ENCODE measurements at regions of chr1 and their contacts with region 1.

Region 1: GRCh38 chr1:33295450-33296081 is 25.3 kb downstream of the A3GALT2 start:
- DNase-seq: peak; percentile 86 to 95 (median 93)
- ATAC-seq: peak; percentile 97
- H3K4me3 ChIP-seq: no peak overlapping the region
- H3K4me1 ChIP-seq: no peaks in the 10 kb centered on the region
- CTCF ChIP-seq: peak; percentile 96

Region 2: GRCh38 chr1:32948905-32949304 is 346.7 kb before region 1 on chr1:
- intact Hi-C with region 1: no loop called
- DNase-seq: no peak
- ATAC-seq: peak; percentile 95
- H3K4me3 ChIP-seq: no peak overlapping the region
- H3K4me1 ChIP-seq: peaks cover 30% of the 10 kb centered on the region
- CTCF ChIP-seq: no peak

Region 3: DNA sequence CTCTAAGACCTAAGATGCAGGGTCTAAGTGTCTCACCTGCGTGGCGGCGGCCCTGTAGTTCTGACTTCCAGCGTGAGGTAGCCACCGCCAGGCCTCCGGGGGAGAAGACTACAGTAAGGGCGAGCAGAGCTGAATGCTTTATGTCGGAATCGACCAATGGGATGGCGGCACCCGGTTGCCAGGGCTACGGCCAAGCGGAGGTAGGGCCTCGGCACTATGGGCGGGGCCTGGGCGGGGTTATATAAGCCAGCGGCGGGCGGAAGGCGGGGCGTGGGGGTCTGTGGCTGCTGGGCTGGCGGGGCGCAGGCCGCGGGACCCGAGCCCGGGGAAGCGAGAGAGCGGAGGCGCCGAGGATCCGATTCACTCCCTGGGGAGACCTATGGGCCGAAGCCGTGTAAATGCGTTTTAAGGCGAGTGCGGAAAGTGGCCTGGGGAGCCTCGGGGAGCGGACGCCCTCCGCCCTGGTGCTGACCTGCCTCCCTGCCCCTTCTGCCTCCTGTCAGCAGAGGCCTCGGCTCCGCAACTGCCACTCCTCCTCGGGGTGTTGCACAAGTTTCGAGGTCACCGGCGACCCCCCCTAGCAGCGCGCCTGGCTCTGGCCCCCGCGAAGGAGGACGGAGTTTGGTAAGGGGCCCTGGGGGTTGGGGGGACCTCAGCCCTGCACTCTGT is 214.5 kb before region 1 on chr1 and contains the start of gene AZIN2:
- intact Hi-C with region 1: no loop called
- DNase-seq: peak; percentile 98 to 99 (median 99)
- ATAC-seq: peak; percentile 99
- H3K4me3 ChIP-seq: peak within 1 kb of the TSS; percentile 29
- H3K4me1 ChIP-seq: no peaks in the 10 kb centered on the region
- CTCF ChIP-seq: no peak
- total RNA-seq, gene AZIN2: 13.8 to 36.5 (median 19.0) TPM

Region 4: DNA sequence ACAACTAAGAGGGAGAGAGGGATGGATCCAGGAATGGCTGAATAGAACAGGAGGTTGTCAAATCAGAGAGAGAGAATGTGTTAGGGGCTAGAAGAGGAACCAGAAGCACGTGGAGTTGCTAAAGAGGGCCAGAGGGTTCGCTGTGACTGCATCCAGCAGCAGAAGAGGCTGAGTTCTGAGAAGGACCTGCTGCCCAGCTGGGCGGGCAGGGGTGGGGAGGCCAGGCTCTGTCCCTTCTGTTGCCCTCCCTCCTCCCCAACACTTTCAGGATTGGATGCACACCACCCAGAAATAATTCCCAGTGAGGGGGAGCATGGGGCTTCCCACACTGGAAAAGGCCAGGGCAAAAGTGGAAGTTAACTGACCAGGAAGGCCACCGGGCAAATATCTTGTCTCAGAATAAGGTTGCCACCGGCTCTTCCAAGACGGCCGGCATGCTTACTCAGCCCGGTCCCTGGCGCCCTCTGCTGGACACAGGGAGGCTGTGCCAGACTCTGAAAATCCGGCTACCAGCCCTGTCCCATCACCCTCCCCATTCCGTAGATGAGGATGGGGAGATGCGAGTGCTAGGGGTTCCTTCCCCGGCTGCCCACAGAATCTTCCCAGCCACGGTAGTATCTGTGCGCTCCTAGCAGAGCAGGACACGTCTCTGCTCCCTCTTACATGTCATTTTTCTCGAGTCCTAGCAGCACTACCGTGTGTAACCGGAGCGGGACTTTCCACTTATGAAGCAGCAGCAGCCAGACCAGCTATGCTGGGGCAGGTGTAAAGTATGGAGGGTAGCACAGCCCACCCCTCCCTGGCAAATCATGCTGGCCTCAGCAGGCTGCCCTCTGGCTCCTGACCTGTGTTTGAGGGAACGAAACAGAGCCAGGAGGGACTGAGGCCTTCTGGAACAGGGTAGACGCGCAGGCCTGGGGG is 72.2 kb after region 1 on chr1:
- intact Hi-C with region 1: loop called (anchors 5 kb)
- DNase-seq: peak; percentile 85 to 91 (median 89)
- ATAC-seq: peak; percentile 94
- H3K4me3 ChIP-seq: no peak overlapping the region
- H3K4me1 ChIP-seq: no peaks in the 10 kb centered on the region
- CTCF ChIP-seq: peak; percentile 96

Region 5: DNA sequence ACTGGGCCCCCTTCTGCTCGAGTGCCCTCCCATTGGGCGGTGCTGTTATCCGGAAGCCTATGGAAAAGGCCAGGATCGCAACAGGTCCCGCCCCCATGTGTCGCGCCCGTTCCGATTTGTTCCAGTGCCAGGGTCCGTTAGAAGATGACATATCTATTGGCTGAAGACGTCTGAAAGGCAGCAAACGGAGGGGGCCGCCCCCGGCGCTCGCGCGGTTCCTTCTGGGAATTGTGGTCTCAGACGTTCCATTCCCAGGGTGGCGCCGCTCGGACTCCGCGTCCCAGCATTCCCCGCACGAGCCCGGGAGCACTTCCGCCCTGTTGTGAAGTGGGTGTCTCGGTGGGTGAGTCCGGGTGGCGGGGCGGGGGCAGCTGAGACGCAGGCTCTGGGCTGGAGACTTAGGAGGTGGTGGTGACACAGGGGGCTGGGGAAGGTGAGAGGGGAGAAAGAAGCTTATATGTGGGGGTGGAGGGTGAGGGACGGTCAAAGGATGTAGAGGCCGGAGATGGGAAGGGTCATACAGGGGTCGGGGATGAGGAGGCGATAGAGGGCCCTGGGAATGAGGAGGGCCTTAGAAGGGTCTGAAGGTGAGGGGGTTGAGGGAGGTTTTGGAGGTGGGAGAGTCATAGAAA is 176.9 kb after region 1 on chr1 and contains the start of gene ZSCAN20:
- intact Hi-C with region 1: loop called in 1 of 2 experiments (anchors 5 kb)
- DNase-seq: peak; percentile 97 to 98 (median 97)
- ATAC-seq: peak; percentile 98
- H3K4me3 ChIP-seq: peak within 1 kb of the TSS; percentile 12
- H3K4me1 ChIP-seq: no peaks in the 10 kb centered on the region
- CTCF ChIP-seq: no peak
- total RNA-seq, gene ZSCAN20: 4.3 to 8.8 (median 5.7) TPM